ENCODE measurements at regions of chr2 and their contacts with region 1.

Region 1: DNA sequence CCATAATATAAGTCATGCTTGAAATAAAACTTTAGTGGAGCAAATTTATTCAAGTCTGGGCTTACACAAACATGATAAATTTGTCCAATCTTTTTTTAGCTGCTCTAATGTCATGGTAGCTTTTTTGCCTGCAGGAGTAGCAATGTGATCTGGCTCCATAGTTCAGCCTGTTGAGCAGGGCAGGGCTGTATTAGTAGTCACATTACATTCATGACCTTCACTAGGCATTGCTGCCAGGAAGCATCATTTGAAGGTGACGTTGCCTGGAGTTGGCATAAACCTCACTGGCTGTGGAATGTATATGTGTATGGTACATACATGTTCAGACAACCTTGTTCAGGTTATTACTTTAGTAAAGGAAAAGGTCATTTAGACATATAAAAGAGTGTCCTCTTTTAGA is 76.6 kb downstream of the CCDC85A start:
- DNase-seq: no peak
- H3K4me3 Mint-ChIP-seq: no peak overlapping the region
- H3K27ac Mint-ChIP-seq: no peak overlapping the region
- H3K4me1 Mint-ChIP-seq: no peaks in the 10 kb centered on the region
- H3K27me3 Mint-ChIP-seq: no peaks in the 10 kb centered on the region

Region 2: DNA sequence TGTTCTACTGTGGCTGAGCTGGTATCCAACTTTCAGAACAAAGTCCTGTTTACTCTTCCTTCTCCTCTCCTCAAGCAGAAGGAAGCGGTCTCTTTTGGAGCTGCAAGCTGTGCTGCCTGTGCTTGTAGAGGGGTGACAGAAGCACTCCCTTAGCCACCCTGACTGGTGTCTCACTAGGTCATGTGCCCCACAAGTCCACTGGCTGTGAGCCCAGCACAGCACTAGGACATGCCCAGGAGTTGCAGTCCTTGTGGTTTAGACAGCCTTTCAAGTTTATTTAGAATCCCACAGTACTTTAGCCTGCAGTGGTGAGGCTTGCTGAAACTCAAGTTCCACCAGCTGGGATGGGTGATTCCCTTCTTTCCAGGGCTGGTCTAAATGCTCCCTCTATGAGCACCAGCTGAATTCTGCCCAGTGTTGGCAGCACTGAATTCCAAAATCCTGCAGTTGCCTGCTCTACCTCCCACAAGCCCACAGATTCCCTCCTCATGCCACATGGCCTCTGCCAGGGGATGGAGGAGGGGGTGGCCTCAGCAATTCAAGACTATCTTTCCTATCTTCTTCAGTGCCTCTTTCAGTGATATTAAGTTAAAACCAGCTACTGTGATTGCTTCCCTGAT is 15.4 kb before region 1 on chr2:
- CTCF ChIA-PET with region 1: no interaction called
- POLR2A ChIA-PET with region 1: no interaction called
- intact Hi-C with region 1: loop called (anchors 1 kb)
- DNase-seq: no peak
- H3K4me3 Mint-ChIP-seq: no peak overlapping the region
- H3K27ac Mint-ChIP-seq: no peak overlapping the region
- H3K4me1 Mint-ChIP-seq: no peaks in the 10 kb centered on the region
- H3K27me3 Mint-ChIP-seq: no peaks in the 10 kb centered on the region

Region 3: DNA sequence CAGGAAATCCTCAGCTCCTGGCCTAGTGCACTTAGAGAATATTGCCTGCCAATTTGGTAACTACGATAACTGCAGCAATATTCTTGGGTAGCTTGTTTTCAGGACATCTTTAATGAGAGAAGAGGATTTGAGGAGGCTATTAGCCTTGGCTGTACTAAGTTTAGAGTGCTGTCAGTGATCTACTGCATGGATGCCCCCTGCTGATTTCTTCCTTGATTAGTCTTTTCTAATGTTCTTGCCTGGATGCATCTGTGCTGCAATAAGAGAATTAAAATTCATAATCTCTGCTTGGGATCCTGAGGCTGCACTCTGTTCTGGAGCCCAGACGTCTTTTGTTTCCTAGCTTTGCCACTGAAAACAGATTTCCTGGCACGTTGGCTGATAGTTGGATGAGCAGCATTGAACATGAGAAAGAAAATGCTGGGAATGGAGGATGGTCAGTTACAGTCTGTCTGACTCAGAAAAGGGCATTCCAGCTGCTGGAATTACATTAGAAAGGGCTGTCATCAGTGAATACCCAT is 38.8 kb after region 1 on chr2:
- CTCF ChIA-PET with region 1: no interaction called
- POLR2A ChIA-PET with region 1: no interaction called
- intact Hi-C with region 1: no loop called
- DNase-seq: no peak
- H3K4me3 Mint-ChIP-seq: no peak overlapping the region
- H3K27ac Mint-ChIP-seq: no peak overlapping the region
- H3K4me1 Mint-ChIP-seq: no peaks in the 10 kb centered on the region
- H3K27me3 Mint-ChIP-seq: no peaks in the 10 kb centered on the region

Region 4: DNA sequence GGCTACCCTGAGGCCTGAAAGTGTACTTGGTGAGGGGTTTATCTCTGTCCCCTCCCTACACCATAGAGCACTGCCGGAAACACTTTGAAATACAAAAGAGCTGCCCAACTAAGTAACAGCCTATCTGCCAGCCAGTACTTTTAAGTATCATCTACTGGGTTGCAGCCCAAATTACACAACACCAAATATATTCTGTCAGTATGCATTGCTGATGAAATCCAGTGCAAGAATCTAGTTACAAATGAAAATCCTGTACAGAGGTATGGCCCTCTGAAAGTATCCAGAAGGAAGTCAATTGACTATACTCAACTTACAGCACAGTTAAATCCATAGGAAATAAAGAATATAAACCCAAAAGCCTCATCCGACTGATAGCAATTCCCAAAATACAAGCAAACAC is 204.2 kb after region 1 on chr2:
- CTCF ChIA-PET with region 1: no interaction called
- POLR2A ChIA-PET with region 1: no interaction called
- intact Hi-C with region 1: no loop called
- DNase-seq: no peak
- H3K4me3 Mint-ChIP-seq: no peak overlapping the region
- H3K27ac Mint-ChIP-seq: no peak overlapping the region
- H3K4me1 Mint-ChIP-seq: no peaks in the 10 kb centered on the region
- H3K27me3 Mint-ChIP-seq: no peaks in the 10 kb centered on the region

Measured in activated CD4-positive, alpha-beta memory T cell treated with anti-CD3 and anti-CD28 coated beads for 36 hours (primary cell).